ENCODE measurements at regions of chr22 and their contacts with region 1.

Region 1: GRCh38 chr22:29031227-29032011 is 30.2 kb downstream of the C22orf31 start:
- DNase-seq: peak; percentile 91 to 93
- H3K4me3 ChIP-seq: peak overlapping the region in 1 of 3 donors; percentile 44
- H3K27ac ChIP-seq: peak overlapping the region; percentile 88 to 96 (median 90)
- H3K4me1 ChIP-seq: peaks cover 29 to 44% of the 10 kb centered on the region in 2 donors
- H3K27me3 ChIP-seq: no peaks in the 10 kb centered on the region
- CTCF ChIP-seq: peak in 3 of 6 experiments; percentile 2 to 19 (median 5)
- POLR2A ChIP-seq: peak in 1 of 2 donors; percentile 58

Region 2: DNA sequence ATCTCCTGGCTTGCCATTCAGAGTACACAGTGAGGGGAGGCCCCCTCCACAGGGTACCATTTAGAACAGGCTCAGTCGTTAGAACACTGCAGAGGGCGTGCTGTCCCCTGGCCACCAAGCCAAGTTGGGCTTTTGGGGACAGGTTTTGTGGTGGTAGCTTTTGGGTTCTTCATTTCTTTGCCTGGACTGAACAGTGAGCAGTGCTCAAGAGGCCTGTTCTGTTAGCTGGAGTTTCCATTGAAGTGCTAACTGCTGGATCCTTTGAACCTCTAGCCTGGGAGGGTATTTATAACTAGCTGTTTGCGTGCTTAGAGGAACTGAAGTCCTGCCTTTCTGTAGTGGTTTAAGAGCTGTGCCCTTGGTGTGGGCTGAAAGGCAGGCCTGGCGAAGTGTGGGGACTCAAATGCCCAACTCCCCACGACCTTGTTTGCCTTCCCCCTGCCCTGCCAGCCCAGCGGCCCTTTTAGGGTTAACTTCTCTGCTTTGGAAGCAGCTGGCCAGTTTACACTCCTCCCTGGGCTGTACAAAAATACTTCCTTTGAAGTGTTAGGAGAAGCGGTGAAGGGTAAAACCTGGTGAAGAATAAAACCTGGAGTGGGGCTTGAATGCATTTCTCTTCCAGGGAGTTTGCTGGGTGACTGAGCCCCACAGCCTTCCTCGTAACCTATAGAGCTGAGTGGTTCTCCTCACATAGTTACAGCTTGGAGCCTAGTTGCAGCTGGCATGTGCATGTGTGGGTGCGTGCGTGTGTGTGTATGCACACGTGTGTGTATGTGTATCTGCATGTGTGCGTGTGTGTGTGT is 113.5 kb before region 1 on chr22:
- intact Hi-C with region 1: loop called (anchors 10 kb)
- DNase-seq: peak; percentile 72 to 76
- H3K4me3 ChIP-seq: no peak overlapping the region
- H3K27ac ChIP-seq: peak overlapping the region; percentile 85 to 94 (median 89)
- H3K4me1 ChIP-seq: peaks cover 44 to 64% of the 10 kb centered on the region in 2 donors
- H3K27me3 ChIP-seq: no peaks in the 10 kb centered on the region
- CTCF ChIP-seq: peak in 1 of 6 experiments; percentile 29
- POLR2A ChIP-seq: no peak

Region 3: DNA sequence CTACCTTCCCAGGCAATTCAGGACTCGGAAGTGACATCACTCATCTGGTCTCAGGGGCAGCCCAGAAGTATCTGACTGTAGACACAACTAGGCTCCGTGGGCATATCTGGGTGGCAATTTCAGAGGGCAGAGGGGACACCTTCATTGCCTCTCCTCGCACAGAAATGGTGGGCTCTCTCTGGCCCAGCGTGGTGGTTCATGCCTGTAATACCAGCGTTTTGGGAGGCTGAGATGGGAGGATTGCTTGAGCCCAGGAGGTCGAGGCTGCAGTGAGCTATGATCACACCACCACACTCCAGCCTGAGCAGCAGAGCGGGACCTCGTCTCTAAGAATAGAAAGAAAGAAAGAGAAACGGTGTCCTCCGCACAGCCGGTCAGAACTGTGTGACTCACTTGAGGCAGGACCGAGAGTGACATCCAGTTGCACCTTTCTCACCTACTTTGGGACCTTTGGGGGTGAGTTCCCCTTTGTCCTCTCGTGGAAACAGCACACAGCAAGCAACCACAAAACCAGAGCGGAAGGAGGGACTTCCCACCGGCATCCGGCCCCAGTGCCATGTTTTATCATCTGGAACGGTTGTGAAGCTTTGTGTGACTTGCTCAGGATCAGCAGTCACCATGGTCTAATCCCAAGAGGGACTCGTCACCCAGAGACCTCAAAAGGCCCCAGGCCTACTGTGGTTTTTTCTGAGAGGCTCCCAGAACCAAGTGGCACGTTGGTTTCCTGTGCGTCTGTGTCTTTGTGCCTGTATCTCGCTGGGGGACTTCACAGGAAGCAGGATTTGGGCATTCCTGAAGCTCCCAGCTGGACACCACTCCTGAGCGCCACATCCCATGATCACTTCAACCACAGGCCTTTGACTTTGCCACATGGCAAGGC is 135.9 kb after region 1 on chr22:
- intact Hi-C with region 1: no loop called
- DNase-seq: no peak
- H3K4me3 ChIP-seq: no peak overlapping the region
- H3K27ac ChIP-seq: no peak overlapping the region
- H3K4me1 ChIP-seq: no peaks in the 10 kb centered on the region
- H3K27me3 ChIP-seq: no peaks in the 10 kb centered on the region
- CTCF ChIP-seq: no peak
- POLR2A ChIP-seq: no peak